ENCODE measurements at regions of chr5 and their contacts with region 1.

Region 1: DNA sequence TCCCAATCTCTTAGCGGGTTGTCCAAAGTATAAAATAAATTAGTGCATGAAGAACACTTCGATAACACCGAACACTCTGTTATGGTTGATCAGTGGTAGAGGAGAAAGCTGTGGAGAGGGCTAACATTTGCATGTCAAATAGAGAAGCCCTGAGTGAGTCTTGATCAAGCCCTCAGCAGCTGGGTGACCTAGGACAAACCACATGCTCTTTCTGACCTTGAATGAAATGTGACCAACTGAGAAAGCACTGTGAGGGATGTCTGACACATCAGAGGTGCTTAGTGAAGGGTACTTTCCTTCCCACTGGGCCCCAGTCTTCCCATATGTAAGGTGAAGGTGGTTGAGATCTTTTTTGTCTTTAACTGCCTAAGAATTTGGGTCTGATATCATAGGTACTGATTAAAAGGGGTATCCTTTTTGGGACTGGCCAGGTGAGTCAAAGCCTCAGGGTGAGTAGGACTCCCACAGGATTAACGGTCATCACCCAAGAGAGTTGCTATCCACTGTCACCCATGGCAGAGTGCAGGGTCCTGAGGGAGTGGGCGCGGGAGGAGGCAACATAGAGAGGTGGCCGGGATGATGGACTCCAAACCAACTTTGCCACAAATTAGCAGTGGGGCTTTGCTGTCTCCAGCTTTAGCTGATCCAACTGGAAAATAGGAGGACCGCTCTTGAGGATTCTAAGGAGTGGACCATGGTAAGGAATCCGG is 53.5 kb downstream of the KIF4B start:
- DNase-seq: peak; percentile 16
- CTCF ChIP-seq: no peak

Region 2: GRCh38 chr5:155085282-155086013 is 18.4 kb after region 1 on chr5:
- CTCF ChIA-PET with region 1: interaction called, 12 read pairs
- POLR2A ChIA-PET with region 1: no interaction called
- DNase-seq: no peak
- CTCF ChIP-seq: no peak

Region 3: GRCh38 chr5:155101697-155102096 is 34.7 kb after region 1 on chr5:
- CTCF ChIA-PET with region 1: no interaction called
- POLR2A ChIA-PET with region 1: no interaction called
- DNase-seq: no peak
- CTCF ChIP-seq: no peak

Measured in GM10248 (cell line).